MCF 10A (cell line): ENCODE measurements at regions of chr4 and their contacts with region 1.

Region 1: GRCh38 chr4:159608437-159608836 is 505.6 kb downstream of the RAPGEF2 start:
- DNase-seq: peak; percentile 57
- H3K4me3 Mint-ChIP-seq: no peak overlapping the region
- H3K27ac Mint-ChIP-seq: no peak overlapping the region
- H3K4me1 Mint-ChIP-seq: peaks cover 14% of the 10 kb centered on the region
- H3K27me3 Mint-ChIP-seq: no peaks in the 10 kb centered on the region
- CTCF ChIP-seq: peak; percentile 34

Region 2: DNA sequence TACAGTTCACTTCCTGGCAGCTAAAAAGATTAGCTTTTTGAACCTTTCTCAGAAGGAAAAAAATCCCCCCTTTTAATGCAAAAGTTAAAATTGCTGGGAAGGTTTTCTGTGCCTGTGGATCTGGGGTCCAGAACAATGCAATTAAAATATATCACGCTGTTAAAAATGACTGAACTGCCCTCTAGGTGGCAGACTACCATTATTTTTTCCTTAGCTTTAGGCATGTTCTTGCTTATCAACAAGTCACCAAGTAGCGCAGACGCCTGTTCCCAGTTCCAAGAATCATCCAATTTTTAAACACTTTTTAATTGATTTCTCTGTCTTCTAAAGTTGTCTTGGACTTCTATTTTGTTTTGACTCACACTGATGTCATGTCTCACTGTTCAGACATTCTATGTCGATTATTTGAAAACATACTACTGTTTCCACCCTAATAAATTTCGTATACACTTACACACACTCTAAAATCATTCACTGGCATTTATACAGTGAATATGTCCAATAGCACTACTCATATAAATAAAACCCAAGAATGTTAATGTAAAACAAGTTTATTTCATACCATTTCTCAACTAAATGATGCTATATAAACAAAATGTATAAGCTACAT is 156.0 kb after region 1 on chr4:
- CTCF ChIA-PET with region 1: no interaction called
- POLR2A ChIA-PET with region 1: no interaction called
- intact Hi-C with region 1: loop called (anchors 2 kb)
- DNase-seq: peak; percentile 74
- H3K4me3 Mint-ChIP-seq: no peak overlapping the region
- H3K27ac Mint-ChIP-seq: no peak overlapping the region
- H3K4me1 Mint-ChIP-seq: no peaks in the 10 kb centered on the region
- H3K27me3 Mint-ChIP-seq: no peaks in the 10 kb centered on the region
- CTCF ChIP-seq: peak; percentile 56